Common myeloid progenitor, CD34-positive (primary cell): ENCODE measurements at regions of chr12 and their contacts with region 1.

Region 1: GRCh38 chr12:14995583-14996425 is 23.0 kb downstream of the PDE6H start:
- DNase-seq: peak; percentile 79 to 91 (median 88)
- H3K4me3 ChIP-seq: no peak overlapping the region
- H3K27ac ChIP-seq: no peak overlapping the region
- H3K4me1 ChIP-seq: peaks cover 2 to 12% (median 7%) of the 10 kb centered on the region in 4 experiments
- H3K27me3 ChIP-seq: peaks cover 0 to 4% (median 0%) of the 10 kb centered on the region in 5 experiments

Region 2: DNA sequence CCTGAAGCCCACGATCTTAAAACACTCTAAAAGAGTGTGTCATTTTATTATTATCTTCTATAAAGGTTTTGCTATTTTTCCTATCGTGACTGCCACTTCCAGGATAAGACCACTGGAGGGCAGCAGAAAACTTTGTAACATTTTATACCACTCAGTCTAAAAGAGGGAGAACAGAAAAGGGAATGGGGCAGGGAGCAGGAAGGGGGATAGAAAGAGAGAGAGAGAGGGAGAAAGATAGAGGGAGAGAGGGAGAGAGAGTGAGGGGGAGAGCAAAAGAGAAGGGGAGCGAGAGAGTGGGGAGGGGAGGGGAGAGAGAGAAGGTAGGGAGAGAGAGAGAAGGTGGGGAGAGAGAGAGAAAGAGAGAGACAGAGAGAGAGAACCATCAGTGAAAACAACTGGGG is 150.5 kb before region 1 on chr12:
- CTCF ChIA-PET with region 1: interaction called, 43 read pairs
- POLR2A ChIA-PET with region 1: no interaction called
- DNase-seq: peak; percentile 49 to 66 (median 59)
- H3K4me3 ChIP-seq: no peak overlapping the region
- H3K27ac ChIP-seq: no peak overlapping the region
- H3K4me1 ChIP-seq: peaks cover 5 to 12% (median 9%) of the 10 kb centered on the region in 4 experiments
- H3K27me3 ChIP-seq: no peaks in the 10 kb centered on the region

Region 3: DNA sequence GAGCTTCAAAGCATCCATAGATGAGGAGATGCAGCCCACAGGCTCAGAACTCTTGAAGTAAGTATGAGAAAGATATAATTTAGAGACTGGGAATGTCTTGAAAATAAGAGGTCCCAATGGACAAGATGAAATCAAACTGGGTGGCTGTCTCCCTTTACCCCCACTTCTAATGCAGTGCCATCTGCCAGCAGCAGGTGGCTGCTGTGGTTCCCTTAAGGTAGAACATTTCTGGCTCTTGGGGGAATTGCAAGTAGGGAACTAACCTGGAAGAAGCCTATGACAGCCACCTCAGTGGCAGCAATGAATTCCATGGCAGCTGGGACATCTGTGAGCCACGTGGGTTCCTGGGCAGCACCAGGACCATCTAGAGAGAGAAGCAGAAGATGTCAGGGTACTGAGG is 58.1 kb before region 1 on chr12:
- CTCF ChIA-PET with region 1: interaction called, 30 read pairs
- POLR2A ChIA-PET with region 1: no interaction called
- DNase-seq: peak in 2 of 3 donors; percentile 53 to 59
- H3K4me3 ChIP-seq: no peak overlapping the region
- H3K27ac ChIP-seq: no peak overlapping the region
- H3K4me1 ChIP-seq: peaks cover 4 to 9% (median 7%) of the 10 kb centered on the region in 4 experiments
- H3K27me3 ChIP-seq: no peaks in the 10 kb centered on the region

Region 4: DNA sequence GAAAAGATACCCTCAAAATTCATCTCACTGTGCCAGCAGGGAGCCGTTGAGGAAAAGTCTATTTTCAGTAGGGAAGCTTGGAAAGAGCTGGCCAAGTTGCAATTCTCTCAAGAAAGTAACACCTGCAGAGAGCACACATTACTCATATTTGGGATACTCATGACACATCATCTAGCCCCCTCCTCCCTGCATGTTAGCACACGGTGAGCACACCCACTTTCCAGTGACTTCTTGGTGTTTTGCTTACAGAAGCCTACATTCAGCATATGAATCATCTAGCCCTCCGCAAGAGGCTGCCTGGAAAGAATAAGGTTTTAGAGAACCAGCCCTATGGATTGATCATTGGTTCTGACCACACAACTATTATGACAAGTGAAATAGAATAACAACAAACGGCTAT is 451.0 kb after region 1 on chr12:
- CTCF ChIA-PET with region 1: no interaction called
- POLR2A ChIA-PET with region 1: no interaction called
- DNase-seq: peak in 1 of 3 donors; percentile 3
- H3K4me3 ChIP-seq: no peak overlapping the region
- H3K27ac ChIP-seq: no peak overlapping the region
- H3K4me1 ChIP-seq: no peaks in the 10 kb centered on the region
- H3K27me3 ChIP-seq: peaks cover 0 to 4% (median 0%) of the 10 kb centered on the region in 5 experiments